B cell (primary cell): ENCODE measurements at regions of chr7 and their contacts with region 1.

Region 1: DNA sequence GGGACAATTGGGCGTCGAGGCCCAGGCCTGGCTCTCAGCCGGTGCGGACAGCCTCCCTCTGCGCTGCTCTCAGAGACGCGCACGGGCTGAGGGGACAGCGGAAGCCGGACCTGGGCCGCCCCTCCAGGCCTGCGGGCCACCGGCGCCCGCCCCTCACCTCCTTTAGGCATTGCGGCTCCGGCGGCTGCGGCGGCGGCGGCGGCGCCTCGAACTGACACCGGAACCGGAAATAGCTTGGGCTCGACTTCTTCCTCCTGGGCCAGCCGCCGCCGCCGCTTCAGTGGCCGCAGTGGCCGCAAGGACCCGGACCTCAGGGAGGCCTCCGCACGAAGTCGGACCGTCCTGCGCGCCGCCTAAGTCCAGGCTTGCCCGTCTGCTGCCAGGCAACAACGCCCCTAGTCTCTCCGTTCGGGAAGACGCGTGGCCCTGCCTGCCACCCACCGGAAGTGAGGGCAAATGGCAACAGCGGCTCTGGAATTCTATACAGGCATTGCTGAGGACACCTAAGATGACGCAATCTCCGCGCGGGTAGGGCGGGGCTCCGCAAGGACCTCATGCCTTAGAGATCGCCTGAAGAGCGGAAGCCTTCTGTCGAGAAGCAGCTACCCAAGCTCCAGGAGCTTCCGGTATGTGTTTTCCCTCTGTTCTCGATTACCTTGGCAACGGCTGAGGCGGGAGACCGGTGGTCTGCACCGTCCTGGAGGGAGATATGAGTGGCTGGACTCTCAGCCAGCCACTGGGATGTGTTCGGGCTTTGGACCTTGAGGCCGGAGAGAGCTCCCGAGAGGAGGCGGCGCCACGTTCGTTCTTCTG is at the starts of genes BUD31 and PDAP1:
- DNase-seq: peak; percentile 100
- ATAC-seq: peak; percentile 90
- H3K4me3 ChIP-seq: peak within 1 kb of the TSS; percentile 93 to 99 (median 95)
- H3K4me3 Mint-ChIP-seq: peak within 1 kb of the TSS; percentile 91
- H3K27ac ChIP-seq: peak within 1 kb of the TSS; percentile 89 to 96
- H3K27ac Mint-ChIP-seq: peak within 1 kb of the TSS; percentile 100
- H3K4me1 ChIP-seq: peaks cover 25 to 35% of the 10 kb centered on the region in 2 donors
- H3K4me1 Mint-ChIP-seq: peaks cover 50% of the 10 kb centered on the region
- H3K27me3 ChIP-seq: no peaks in the 10 kb centered on the region
- H3K27me3 Mint-ChIP-seq: no peaks in the 10 kb centered on the region
- CTCF ChIP-seq: no peak
- total RNA-seq, gene BUD31: 53.9 and 57.8 TPM in 2 replicates
- total RNA-seq, gene PDAP1: 60.4 and 61.7 TPM in 2 replicates

Region 2: DNA sequence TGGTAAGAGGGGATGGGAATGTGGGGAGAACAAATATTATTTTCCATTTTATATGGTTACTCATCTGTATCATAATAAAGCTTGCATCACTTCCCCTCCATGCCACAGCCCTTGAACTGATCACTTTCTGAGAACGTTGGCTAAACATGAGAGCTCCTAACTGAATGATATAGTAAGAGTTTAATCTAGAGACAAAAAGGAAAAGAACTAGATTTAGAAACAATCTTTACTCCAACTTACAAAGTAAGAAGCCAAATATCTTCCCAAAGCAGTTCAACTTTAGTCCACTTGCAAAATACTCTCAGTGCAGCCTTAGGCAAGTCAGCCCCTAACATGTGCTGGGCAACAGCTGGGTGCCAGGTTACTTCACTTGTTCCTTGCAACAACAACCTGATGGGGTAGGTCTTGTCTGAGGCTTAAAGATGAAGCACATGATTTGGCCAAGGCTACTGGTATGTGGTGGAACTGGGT is 285.0 kb before region 1 on chr7:
- CTCF ChIA-PET with region 1: no interaction called
- POLR2A ChIA-PET with region 1: no interaction called
- intact Hi-C with region 1: no loop called
- DNase-seq: no peak
- ATAC-seq: no peak
- H3K4me3 ChIP-seq: no peak overlapping the region
- H3K4me3 Mint-ChIP-seq: no peak overlapping the region
- H3K27ac ChIP-seq: no peak overlapping the region
- H3K27ac Mint-ChIP-seq: no peak overlapping the region
- H3K4me1 ChIP-seq: peaks cover 13 to 25% of the 10 kb centered on the region in 2 donors
- H3K4me1 Mint-ChIP-seq: peaks cover 56% of the 10 kb centered on the region
- H3K27me3 ChIP-seq: no peaks in the 10 kb centered on the region
- H3K27me3 Mint-ChIP-seq: no peaks in the 10 kb centered on the region
- CTCF ChIP-seq: no peak

Region 3: DNA sequence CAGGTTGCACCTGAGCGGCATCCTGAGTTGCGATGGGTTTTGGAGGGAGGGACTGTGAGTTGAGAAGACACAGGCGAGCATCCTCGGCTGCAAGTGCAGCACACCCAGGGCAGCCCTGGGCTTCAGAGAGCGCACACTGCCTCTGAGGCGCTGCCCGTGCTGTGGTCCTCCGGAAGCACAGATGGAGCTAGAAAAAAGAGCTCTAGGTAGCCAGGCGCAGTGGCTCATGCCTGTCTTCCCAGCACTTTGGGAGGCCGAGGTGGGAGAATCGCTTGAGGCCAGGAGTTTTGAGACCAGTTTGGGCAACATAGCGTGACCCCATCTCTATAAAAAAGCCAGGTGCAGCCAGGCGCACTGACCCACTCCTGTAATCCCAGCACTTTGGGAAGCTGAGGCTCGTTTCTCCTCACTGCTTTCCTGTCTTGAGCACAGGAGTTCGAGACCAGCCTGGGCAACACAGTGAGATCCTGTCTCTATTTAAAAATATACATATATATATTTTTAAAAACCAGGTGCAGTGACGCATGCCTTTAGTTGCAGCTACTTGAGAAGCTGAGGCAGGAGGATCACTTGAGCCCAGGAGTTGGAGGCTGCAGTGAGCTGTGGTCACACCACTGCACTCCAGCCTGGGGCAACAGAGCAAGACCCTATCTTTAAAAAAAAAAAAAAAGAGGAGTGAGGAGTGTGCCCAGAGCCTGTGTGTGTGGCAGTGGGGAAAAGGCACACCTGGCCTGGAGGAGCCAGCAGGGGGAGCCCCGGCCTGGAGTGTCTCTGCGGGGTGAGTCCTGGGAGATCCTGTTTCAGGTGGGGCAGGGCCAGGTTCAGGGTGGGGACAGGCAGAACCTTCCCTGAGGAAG is 43.4 kb before region 1 on chr7:
- CTCF ChIA-PET with region 1: interaction called, 38 read pairs
- POLR2A ChIA-PET with region 1: no interaction called
- intact Hi-C with region 1: loop called (anchors 1 kb)
- DNase-seq: peak; percentile 73
- ATAC-seq: peak; percentile 96
- H3K4me3 ChIP-seq: no peak overlapping the region
- H3K4me3 Mint-ChIP-seq: no peak overlapping the region
- H3K27ac ChIP-seq: no peak overlapping the region
- H3K27ac Mint-ChIP-seq: no peak overlapping the region
- H3K4me1 ChIP-seq: no peaks in the 10 kb centered on the region
- H3K4me1 Mint-ChIP-seq: peaks cover 1% of the 10 kb centered on the region
- H3K27me3 ChIP-seq: no peaks in the 10 kb centered on the region
- H3K27me3 Mint-ChIP-seq: no peaks in the 10 kb centered on the region
- CTCF ChIP-seq: peak; percentile 76

Region 4: DNA sequence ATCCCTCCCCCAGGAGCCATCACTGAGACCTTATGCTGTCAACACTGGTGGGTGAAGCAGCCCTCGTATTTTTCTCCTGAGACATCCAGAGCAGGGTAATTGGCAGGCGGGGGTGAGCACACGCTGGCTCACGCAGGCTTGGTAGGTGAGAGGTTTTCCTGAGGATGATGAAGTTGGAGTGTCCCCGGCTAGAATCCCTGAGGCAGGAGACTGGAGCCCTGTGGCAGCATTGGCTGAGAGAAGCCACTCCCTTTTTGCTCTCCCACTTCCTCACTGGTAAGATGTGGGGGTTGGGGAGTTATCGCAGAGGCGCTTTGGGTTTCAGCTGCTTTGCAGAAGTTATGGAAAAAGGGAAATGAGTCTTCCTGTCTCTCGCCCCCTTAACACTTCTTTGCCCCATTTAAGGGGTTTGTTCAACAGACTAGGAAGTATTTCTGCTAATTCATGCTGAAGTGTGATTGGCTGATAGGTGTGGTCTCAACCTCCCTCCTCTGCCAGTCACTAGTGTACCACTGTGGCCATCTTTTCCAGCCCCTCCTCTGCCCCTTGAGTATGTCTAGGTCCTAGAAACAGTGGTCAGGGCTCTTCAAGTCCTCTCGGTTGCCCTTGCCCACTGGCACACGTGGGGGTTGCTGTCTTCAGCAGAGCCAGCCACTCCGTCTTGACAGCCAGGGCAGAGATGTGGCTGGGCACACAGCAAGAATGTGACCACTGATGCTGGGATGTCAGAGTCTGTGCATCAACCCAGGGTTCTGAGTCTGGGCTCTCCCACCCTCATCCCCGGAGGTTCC is 28.4 kb before region 1 on chr7:
- CTCF ChIA-PET with region 1: interaction called, 8 read pairs
- POLR2A ChIA-PET with region 1: interaction called, 33 read pairs
- intact Hi-C with region 1: loop called (anchors 1 kb)
- DNase-seq: peak; percentile 88
- ATAC-seq: peak; percentile 29
- H3K4me3 ChIP-seq: peak overlapping the region; percentile 40 to 72 (median 48)
- H3K4me3 Mint-ChIP-seq: peak overlapping the region; percentile 90
- H3K27ac ChIP-seq: peak overlapping the region; percentile 94 to 96
- H3K27ac Mint-ChIP-seq: peak overlapping the region; percentile 92
- H3K4me1 ChIP-seq: peaks cover 62 to 93% of the 10 kb centered on the region in 2 donors
- H3K4me1 Mint-ChIP-seq: peaks cover 56% of the 10 kb centered on the region
- H3K27me3 ChIP-seq: no peaks in the 10 kb centered on the region
- H3K27me3 Mint-ChIP-seq: no peaks in the 10 kb centered on the region
- CTCF ChIP-seq: no peak

Region 5: GRCh38 chr7:99438573-99439480 is 30.2 kb after region 1 on chr7 and contains the starts of genes CPSF4 and PTCD1:
- CTCF ChIA-PET with region 1: no interaction called
- POLR2A ChIA-PET with region 1: interaction called, 8 read pairs
- intact Hi-C with region 1: loop called (anchors 1 kb)
- DNase-seq: peak; percentile 93
- ATAC-seq: peak; percentile 96
- H3K4me3 ChIP-seq: peak within 1 kb of the TSS; percentile 41 to 97 (median 92)
- H3K4me3 Mint-ChIP-seq: peak within 1 kb of the TSS; percentile 97
- H3K27ac ChIP-seq: peak within 1 kb of the TSS; percentile 59 to 79
- H3K27ac Mint-ChIP-seq: peak within 1 kb of the TSS; percentile 95
- H3K4me1 ChIP-seq: peaks cover 12 to 28% of the 10 kb centered on the region in 2 donors
- H3K4me1 Mint-ChIP-seq: peaks cover 30% of the 10 kb centered on the region
- H3K27me3 ChIP-seq: no peaks in the 10 kb centered on the region
- H3K27me3 Mint-ChIP-seq: no peaks in the 10 kb centered on the region
- CTCF ChIP-seq: no peak
- total RNA-seq, gene CPSF4: 60.0 and 63.2 TPM in 2 replicates
- total RNA-seq, gene PTCD1: 10.2 and 14.8 TPM in 2 replicates

Region 6: GRCh38 chr7:99504603-99505323 is 96.2 kb after region 1 on chr7 and contains the start of gene ZKSCAN5:
- CTCF ChIA-PET with region 1: interaction called, 3 read pairs
- POLR2A ChIA-PET with region 1: interaction called, 9 read pairs
- intact Hi-C with region 1: loop called (anchors 1 kb)
- DNase-seq: peak; percentile 99
- ATAC-seq: peak; percentile 84
- H3K4me3 ChIP-seq: peak within 1 kb of the TSS; percentile 76 to 96 (median 93)
- H3K4me3 Mint-ChIP-seq: peak within 1 kb of the TSS; percentile 96
- H3K27ac ChIP-seq: peak within 1 kb of the TSS; percentile 77 to 80
- H3K27ac Mint-ChIP-seq: peak within 1 kb of the TSS; percentile 98
- H3K4me1 ChIP-seq: peaks cover 20 to 27% of the 10 kb centered on the region in 2 donors
- H3K4me1 Mint-ChIP-seq: peaks cover 31% of the 10 kb centered on the region
- H3K27me3 ChIP-seq: no peaks in the 10 kb centered on the region
- H3K27me3 Mint-ChIP-seq: no peaks in the 10 kb centered on the region
- CTCF ChIP-seq: no peak
- total RNA-seq, gene ZKSCAN5: 10.9 and 11.7 TPM in 2 replicates